CD4-positive, alpha-beta memory T cell (primary cell): ENCODE measurements at regions of chr7 and their contacts with region 1.

Region 1: DNA sequence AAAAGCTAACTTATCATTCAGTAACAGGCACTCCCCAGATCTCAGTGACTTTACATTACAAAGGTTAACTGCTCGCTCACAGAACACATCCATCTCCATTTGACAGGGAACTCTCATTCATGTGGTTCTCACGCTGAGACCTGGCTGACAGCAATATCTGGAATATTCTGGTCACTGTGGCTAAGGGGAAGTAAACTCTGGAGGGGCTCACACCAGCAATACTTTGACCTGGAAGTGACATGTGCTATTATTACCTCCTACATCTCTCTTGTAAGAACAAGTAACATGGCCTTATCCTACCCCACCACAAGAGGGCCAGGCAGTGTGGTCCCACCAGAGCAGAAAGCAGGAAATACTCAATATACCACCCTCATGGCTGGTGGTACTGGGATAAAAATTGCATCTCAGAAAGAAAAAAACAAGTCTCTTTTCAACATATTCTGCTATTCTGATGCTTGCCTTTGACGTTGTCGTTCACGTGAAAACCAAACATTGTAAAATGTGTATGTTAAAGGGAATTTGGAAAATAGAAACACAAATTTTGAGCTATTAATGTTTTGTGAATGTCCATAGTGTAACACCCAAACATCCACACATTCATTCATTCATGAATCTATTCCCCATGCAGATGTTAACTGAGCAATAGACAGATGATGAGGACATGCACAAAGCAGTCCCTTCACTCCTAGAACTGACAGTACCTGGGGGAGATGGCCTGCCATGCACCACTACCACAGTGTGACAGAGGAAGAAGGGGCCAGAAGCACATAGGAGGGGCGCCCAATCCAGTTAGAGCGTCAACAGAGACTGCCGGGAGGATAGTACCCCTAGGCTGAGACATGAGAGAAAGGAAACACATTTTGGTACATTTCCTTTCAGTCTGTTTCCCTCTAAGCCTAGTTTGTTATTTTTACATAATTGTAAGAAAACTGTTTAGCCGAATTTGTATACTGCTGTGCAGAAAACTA is 166.0 kb upstream of the SP4 start:
- DNase-seq: peak; percentile 23 to 54 (median 37)
- H3K4me3 ChIP-seq: no peak overlapping the region
- H3K4me3 Mint-ChIP-seq: no peak overlapping the region
- H3K27ac ChIP-seq: no peak overlapping the region
- H3K27ac Mint-ChIP-seq: peak overlapping the region in 1 of 7 donors; percentile 23
- H3K4me1 ChIP-seq: peaks cover 6% of the 10 kb centered on the region
- H3K4me1 Mint-ChIP-seq: peaks cover 6 to 9% (median 8%) of the 10 kb centered on the region in 4 donors
- H3K27me3 ChIP-seq: no peaks in the 10 kb centered on the region
- H3K27me3 Mint-ChIP-seq: peaks cover 3 to 5% of the 10 kb centered on the region in 2 donors

Region 2: GRCh38 chr7:21526007-21526406 is 264.1 kb after region 1 on chr7:
- CTCF ChIA-PET with region 1: interaction called, 11 read pairs
- POLR2A ChIA-PET with region 1: no interaction called
- intact Hi-C with region 1: no loop called
- DNase-seq: peak in 3 of 5 donors; percentile 9 to 23 (median 18)
- H3K4me3 ChIP-seq: no peak overlapping the region
- H3K4me3 Mint-ChIP-seq: no peak overlapping the region
- H3K27ac ChIP-seq: no peak overlapping the region
- H3K27ac Mint-ChIP-seq: no peak overlapping the region
- H3K4me1 ChIP-seq: no peaks in the 10 kb centered on the region
- H3K4me1 Mint-ChIP-seq: no peaks in the 10 kb centered on the region
- H3K27me3 ChIP-seq: no peaks in the 10 kb centered on the region
- H3K27me3 Mint-ChIP-seq: no peaks in the 10 kb centered on the region

Region 3: GRCh38 chr7:22001345-22002004 is 739.6 kb after region 1 on chr7:
- CTCF ChIA-PET with region 1: interaction called, 8 read pairs
- POLR2A ChIA-PET with region 1: no interaction called
- intact Hi-C with region 1: loop called (anchors 1 kb)
- DNase-seq: peak; percentile 27 to 56 (median 47)
- H3K4me3 ChIP-seq: no peak overlapping the region
- H3K4me3 Mint-ChIP-seq: peak overlapping the region in 3 of 8 donors; percentile 33 to 63 (median 60)
- H3K27ac ChIP-seq: no peak overlapping the region
- H3K27ac Mint-ChIP-seq: peak overlapping the region in 1 of 7 donors; percentile 19
- H3K4me1 ChIP-seq: no peaks in the 10 kb centered on the region
- H3K4me1 Mint-ChIP-seq: peaks cover 0 to 5% (median 2%) of the 10 kb centered on the region in 4 donors
- H3K27me3 ChIP-seq: no peaks in the 10 kb centered on the region
- H3K27me3 Mint-ChIP-seq: peaks cover 2 to 6% of the 10 kb centered on the region in 2 donors